ENCODE measurements at regions of chr6 and their contacts with region 1.

Region 1: DNA sequence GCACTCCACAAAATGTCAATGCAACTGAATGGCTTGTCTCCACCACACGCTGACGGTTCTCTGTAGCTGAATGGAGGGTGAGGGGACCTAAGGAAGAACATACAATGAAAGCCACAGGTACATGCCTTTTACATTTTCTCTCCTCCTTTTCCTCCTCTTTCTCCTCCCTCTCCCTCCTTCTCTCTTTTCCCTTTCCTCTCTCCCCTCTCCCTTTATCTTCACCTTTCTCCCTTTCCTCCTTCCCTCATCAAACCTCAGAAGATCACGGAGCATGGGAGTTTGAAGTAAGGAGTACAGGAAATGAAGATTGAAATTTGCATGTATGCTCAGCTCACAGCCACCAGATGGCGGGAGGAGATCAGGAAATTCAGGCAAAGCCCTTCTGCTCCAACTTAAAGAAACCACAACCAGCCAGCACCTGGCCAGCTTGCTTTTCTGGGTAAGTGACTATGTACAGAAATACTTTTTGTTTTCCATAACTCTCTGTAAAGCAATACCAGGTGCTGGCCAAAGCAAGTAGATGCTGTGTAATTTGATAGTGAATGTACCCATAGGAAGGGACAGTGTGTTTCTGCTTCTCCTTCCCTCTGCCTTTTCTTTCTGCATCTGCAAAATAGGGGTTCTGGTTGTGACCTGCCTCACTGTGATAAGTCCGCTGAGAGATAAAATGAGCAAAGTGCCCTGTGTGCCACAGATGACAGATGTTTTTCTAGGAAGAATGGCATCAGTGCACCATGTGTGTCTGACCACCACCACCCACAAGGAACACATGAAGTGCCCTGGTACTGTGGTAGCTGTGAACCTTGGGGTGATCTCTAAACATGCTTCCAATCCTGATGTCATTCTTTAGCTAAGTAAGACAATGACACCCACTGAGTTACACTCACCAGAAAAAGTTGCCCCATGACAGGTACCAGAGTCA is 18.6 kb upstream of the FOXO3 start:
- DNase-seq: peak; percentile 90
- H3K4me3 ChIP-seq: no peak overlapping the region
- CTCF ChIP-seq: peak; percentile 78

Region 2: DNA sequence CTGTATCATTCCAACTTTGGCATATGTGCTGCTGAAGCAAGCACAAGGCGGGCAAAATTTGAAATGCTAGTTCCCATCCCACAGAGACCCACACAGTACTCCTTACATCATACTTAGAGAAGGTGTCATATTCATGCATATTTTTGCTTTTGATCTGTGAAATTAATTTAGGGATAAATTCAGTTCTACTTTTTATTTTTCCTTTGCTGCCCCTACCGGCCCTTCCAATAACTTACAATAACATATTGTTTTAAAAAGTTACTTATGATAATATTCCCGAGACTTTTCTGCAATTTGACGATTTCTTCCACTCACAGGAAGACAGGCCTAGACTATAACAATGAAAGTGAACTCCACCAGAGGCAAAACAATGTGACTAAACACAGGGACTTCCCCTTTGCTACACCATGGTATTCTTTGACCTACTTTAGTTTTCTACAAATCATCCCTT is 517.5 kb after region 1 on chr6:
- in situ Hi-C with region 1: loop called (anchors 10 kb)
- DNase-seq: no peak
- H3K4me3 ChIP-seq: no peak overlapping the region
- CTCF ChIP-seq: no peak

Measured in astrocyte of the cerebellum (primary cell).